Activated CD4-positive, alpha-beta T cell treated with anti-CD3 and anti-CD28 coated beads for 36 hours (primary cell): ENCODE measurements at regions of chr4 and their contacts with region 1.

Region 1: DNA sequence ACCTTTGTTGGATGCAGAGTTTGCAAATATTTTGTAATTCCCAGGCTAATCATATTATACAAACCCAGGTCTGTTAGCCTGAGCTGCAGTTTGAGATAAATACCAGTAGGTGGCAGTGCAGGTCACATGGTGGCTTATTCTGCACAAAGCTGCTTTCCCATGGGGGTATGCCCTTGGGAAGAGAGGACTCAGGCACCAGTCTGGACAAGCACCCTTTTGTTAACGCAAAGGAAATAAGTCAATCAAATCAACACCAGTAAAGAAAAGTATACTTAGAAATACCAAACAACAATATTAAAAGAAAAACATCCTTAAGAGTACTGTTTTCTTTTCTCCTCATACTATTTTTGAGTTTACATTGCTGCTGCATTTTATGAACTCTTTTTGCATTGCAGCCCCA is 389.0 kb upstream of the ZFP42 start:
- DNase-seq: peak; percentile 21
- ATAC-seq: no peak
- H3K4me3 Mint-ChIP-seq: no peak overlapping the region
- H3K27ac Mint-ChIP-seq: no peak overlapping the region
- H3K4me1 Mint-ChIP-seq: no peaks in the 10 kb centered on the region
- H3K27me3 Mint-ChIP-seq: no peaks in the 10 kb centered on the region

Region 2: DNA sequence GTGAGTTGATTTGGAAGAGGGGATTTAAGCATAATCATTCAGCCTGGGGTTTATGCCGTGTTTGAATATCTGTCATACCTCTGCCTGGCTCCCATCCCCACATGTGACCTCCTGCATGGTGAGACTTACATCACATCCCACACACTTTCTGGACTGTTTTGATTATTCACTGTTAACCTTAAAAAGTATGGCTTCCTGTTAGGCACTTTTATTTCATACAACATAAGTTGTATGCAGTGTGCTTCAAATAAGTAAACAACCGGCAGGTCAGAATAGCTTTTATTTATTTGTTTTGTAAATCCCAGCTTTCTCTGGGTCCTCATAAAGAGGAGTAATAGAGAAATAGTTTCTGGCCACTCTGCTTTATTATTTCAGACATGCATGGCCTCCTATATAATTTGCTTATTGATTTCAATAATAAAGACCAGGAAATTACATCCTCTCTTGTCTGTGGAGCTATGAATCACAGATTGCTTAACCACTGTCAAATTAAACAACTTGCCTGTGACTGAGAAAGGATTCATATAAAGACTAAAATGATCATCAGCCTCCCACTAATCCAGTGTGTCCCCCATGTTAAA is 12.2 kb after region 1 on chr4:
- CTCF ChIA-PET with region 1: no interaction called
- POLR2A ChIA-PET with region 1: no interaction called
- intact Hi-C with region 1: no loop called
- DNase-seq: no peak
- ATAC-seq: no peak
- H3K4me3 Mint-ChIP-seq: no peak overlapping the region
- H3K27ac Mint-ChIP-seq: no peak overlapping the region
- H3K4me1 Mint-ChIP-seq: no peaks in the 10 kb centered on the region
- H3K27me3 Mint-ChIP-seq: no peaks in the 10 kb centered on the region

Region 3: GRCh38 chr4:189128341-189128740 is 1521.8 kb after region 1 on chr4:
- CTCF ChIA-PET with region 1: no interaction called
- POLR2A ChIA-PET with region 1: no interaction called
- intact Hi-C with region 1: loop called in 1 of 2 experiments (anchors 5 kb)
- DNase-seq: no peak
- ATAC-seq: no peak
- H3K4me3 Mint-ChIP-seq: no peak overlapping the region
- H3K27ac Mint-ChIP-seq: no peak overlapping the region
- H3K4me1 Mint-ChIP-seq: no peaks in the 10 kb centered on the region
- H3K27me3 Mint-ChIP-seq: no peaks in the 10 kb centered on the region

Region 4: DNA sequence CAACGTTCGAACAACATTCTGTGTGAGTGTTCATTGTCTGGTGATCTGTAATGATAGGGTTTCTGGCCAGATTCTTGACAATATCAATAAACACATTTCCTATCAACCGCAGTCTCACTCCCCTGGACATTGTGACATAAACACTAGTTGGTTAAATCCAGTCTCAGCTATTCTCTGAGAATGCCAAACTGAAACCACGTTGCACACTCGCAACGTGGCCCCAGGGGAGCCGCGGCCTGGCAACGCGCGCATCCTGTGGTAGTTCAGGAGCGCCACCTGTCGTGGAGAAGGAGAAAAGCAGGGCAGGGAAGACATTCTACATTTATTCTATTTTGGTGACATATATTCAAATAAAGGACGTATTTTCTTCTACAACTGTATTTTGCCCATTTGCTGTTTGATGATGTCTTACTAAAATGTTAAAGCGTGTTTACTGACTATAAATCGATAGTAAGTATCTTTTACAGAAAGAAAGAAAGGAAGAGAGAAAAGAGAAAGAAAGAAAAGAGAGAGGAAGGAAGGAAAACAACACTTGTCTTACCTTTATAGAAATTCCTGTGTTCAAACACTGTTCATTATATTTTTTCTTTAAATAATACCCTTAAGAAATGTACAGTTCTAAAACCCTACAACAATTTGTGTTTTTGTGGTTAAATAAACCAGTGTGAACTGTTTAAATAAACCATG is 1595.7 kb after region 1 on chr4:
- CTCF ChIA-PET with region 1: no interaction called
- POLR2A ChIA-PET with region 1: no interaction called
- intact Hi-C with region 1: loop called (anchors 1 to 5 kb)
- DNase-seq: peak; percentile 70
- ATAC-seq: peak; percentile 66
- H3K4me3 Mint-ChIP-seq: no peak overlapping the region
- H3K27ac Mint-ChIP-seq: no peak overlapping the region
- H3K4me1 Mint-ChIP-seq: peaks cover 11% of the 10 kb centered on the region
- H3K27me3 Mint-ChIP-seq: peaks cover 3% of the 10 kb centered on the region